Psoas muscle (tissue), 8 donors: ENCODE measurements at regions of chr10 and their contacts with region 1.

Region 1: GRCh38 chr10:48667960-48668590 is 16.6 kb upstream of the WDFY4 start:
- DNase-seq: no peak
- ATAC-seq: no peak
- H3K4me3 ChIP-seq: no peak overlapping the region
- H3K27ac ChIP-seq: no peak overlapping the region
- H3K4me1 ChIP-seq: no peaks in the 10 kb centered on the region
- H3K27me3 ChIP-seq: peaks cover 0 to 5% (median 0%) of the 10 kb centered on the region in 3 donors
- CTCF ChIP-seq: no peak

Region 2: GRCh38 chr10:48968036-48968435 is 300.0 kb after region 1 on chr10:
- intact Hi-C with region 1: loop called in 1 of 2 experiments (anchors 2 kb)
- DNase-seq: no peak
- ATAC-seq: no peak
- H3K4me3 ChIP-seq: no peak overlapping the region
- H3K27ac ChIP-seq: no peak overlapping the region
- H3K4me1 ChIP-seq: no peaks in the 10 kb centered on the region
- H3K27me3 ChIP-seq: no peaks in the 10 kb centered on the region
- CTCF ChIP-seq: no peak